ENCODE measurements at regions of chr14 and their contacts with region 1.

Region 1: GRCh38 chr14:24241829-24242443 is 487 bp downstream of the TINF2 start:
- DNase-seq: peak in 7 of 10 donors; percentile 88 to 95 (median 91)
- H3K4me3 ChIP-seq: peak overlapping the region; percentile 64 to 100 (median 87)
- H3K27ac ChIP-seq: peak overlapping the region; percentile 79 to 100 (median 98)
- H3K27me3 ChIP-seq: no peaks in the 10 kb centered on the region
- CTCF ChIP-seq: peak; percentile 38 to 84 (median 69)

Region 2: DNA sequence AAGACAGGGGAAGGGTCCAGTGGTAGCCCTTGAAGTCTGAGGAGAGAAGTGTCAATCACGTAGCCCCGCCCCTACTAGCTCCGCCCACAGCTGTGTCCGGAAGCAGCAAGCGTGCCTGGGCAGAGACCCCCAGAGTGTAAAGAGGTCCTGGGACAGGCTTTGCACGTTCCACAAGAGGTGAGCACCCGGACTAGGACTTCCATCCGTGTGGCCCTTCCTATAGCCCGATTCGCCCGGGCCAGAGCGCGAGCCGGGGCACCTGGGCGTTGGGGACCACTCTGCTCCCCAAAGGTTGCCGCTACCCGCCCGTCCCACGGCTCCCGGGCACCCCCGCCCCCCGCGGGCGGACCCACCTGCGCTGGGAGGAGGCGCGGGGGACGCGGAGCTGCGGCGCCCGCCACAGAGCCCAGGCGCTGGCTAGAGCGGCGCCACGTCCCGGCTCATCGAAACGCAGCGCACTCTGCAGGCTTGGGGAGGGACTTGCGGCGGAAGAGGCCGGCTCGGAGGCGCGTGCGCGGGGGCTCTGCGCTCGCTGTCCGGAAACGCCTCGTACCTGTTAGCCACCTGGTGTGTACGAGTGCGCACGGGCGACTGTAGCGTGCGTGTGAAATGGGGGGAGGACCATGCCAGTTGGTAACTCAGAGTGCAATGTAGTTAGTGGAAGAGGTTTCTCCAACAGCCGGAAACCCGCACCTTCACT is 29.3 kb after region 1 on chr14 and contains the start of gene RABGGTA:
- intact Hi-C with region 1: loop called (anchors 2 to 5 kb)
- DNase-seq: peak; percentile 65 to 90 (median 80)
- H3K4me3 ChIP-seq: peak within 1 kb of the TSS; percentile 65 to 100 (median 94)
- H3K27ac ChIP-seq: peak within 1 kb of the TSS; percentile 75 to 100 (median 98)
- H3K27me3 ChIP-seq: no peaks in the 10 kb centered on the region
- CTCF ChIP-seq: peak; percentile 66 to 94 (median 86)
- total RNA-seq, gene RABGGTA: 22.9 to 63.2 (median 35.7) TPM

Region 3: DNA sequence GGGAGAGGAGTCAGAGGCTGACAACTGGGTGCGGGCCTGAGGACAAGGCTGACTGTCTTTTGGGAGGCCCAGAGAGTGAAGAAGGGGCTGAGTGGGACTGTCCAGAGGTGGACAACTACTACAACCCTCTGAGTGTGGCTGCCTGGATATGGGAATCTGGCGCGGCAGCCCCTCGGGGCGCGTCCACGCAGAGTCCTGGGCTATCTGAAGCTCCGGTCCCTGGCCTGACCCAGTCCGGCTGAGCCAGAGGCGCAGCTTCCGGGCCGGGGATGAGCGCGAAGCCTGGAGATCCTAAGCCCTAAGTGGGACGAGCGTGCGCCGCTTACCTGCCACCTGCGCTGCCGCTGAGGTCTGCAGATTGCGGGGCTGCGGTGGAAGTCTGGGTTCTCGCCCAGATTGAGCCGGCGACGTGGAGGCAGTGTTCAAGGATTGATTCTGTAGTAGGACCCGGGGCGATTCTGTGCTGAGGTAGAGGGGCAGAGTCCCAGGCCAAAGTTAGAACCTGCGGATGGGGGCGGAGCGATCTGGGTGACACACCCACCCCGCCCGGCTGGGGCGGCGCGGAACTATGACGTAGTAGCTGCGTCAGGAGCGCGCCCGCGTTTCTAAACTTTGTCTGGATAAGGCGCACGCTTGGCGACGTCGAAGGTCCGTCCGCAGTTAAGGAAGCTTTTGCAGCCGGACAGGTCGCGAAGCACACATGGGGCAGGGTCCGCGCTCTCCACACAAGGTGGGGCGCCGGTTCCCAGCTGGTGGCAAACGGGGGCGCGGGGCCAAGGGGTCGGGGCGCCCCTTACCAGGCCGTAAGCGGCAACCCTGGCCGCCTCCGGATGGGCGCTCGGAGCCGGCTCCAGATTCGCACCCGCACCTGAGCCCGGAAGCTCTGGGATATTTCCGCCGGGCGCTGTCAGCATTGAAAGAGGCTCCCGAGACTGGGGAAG is 57.6 kb after region 1 on chr14 and contains the starts of genes DHRS1 and NOP9:
- intact Hi-C with region 1: loop called (anchors 1 to 2 kb)
- DNase-seq: peak; percentile 87 to 95 (median 92)
- H3K4me3 ChIP-seq: peak within 1 kb of the TSS; percentile 68 to 100 (median 96)
- H3K27ac ChIP-seq: peak within 1 kb of the TSS in 52 of 59 donors; percentile 13 to 91 (median 76)
- H3K27me3 ChIP-seq: no peaks in the 10 kb centered on the region
- CTCF ChIP-seq: peak in 34 of 56 donors; percentile 8 to 62 (median 30)
- total RNA-seq, gene DHRS1: 14.1 to 34.4 (median 22.4) TPM
- total RNA-seq, gene NOP9: 21.2 to 33.3 (median 26.9) TPM

Region 4: DNA sequence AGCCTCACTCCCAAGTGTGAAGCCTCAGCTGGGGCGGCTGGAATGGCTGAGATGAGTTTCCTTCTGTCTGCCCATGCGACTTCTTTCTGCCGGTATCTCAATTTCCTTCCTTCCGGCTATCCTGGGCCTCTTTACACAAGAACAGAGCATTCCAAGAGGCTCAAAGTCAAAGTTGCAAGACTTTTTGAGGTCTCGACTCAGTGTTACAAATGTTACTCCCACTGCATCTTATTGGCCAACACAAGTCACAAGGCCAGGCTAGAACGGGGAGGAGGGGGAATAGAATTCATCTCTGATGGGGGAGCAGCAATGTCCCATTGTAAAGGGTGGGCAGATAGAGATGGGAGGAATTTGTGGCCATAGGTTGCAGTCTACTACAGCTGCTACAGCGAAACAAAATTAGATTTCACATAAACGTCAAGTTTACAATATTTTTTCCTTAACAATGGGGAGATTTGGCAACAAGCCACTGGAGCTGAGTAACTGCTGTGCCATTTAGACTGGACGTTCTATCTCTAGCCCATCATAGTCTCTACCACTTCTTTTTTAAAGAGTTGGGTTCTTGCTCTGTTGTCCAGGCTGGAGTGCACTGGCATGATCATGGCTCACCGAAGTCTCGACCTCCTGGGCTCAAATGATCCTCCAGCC is 147.4 kb after region 1 on chr14:
- intact Hi-C with region 1: no loop called
- DNase-seq: no peak
- H3K4me3 ChIP-seq: no peak overlapping the region
- H3K27ac ChIP-seq: no peak overlapping the region
- H3K27me3 ChIP-seq: peaks cover 0 to 14% (median 0%) of the 10 kb centered on the region in 45 donors
- CTCF ChIP-seq: no peak

Measured in dorsolateral prefrontal cortex (tissue), 120 donors.